IMR-90 (cell line): ENCODE measurements at regions of chr1 and their contacts with region 1.

Region 1: DNA sequence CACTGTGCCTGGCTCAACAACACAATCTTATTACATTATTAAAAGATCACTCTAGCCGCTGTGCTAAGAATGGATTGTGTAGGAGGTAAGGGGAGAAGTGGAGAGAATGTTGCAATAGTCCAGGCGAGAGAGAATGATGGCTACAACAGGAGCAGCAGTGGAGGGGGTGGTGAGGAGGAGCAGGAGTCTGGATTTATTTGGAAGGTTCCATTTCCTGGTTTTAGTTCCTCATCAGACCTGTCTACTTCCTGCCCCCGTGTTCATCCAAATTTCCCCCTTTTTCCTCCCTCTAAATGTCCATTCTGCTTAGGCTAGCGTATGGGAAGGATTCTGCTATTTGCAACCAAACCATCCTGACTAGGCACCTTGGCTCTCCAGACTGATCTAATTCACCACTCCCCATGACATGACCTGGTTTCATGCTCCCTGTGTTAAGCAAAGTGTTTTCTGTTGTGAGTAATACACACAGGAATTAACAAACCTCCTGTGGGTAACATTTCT is 35.1 kb upstream of the EYA3 start:
- DNase-seq: peak; percentile 86
- ATAC-seq: peak; percentile 89
- H3K4me3 ChIP-seq: no peak overlapping the region
- H3K27ac ChIP-seq: peak overlapping the region; percentile 34; the same call in 1 of the 2 replicates
- H3K4me1 ChIP-seq: peaks cover 5% of the 10 kb centered on the region; the same call in 1 of the 2 replicates
- H3K27me3 ChIP-seq: no peaks in the 10 kb centered on the region
- CTCF ChIP-seq: no peak
- POLR2A ChIP-seq: no peak
- RAD21 ChIP-seq: no peak

Region 2: DNA sequence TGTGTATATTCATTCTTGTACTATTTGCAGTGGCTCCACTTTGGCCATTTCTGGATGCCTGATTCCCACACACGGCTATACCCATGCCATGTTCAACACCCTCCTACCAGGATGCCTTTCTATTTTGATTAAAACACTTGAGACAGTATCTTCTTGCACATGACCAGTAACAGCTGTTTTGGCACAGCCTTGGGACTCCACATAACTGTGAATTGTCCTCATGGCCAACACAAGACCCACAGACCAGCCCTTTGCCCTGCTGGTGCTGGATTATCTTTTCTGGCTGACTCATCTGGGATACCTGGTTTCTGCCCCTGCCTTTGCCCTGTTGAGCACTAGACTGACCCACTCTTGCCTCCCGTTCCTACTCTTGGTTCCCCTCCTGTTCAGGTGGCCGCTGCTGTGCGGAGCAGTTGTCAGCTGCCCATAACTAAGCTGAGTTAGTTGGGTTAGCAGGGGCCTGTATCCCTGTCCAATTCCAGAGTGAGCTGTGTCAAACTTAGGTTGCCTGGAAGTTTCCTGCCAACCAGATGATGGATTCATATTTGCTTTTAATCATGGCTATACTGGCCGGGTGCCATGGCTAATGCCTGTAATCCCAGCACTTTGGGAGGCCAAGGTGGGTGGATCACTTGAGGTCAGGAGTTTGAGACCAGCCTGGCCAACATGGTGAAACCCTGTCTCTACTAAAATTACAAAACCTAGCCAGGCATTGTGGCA is 24.3 kb before region 1 on chr1:
- CTCF ChIA-PET with region 1: no interaction called
- POLR2A ChIA-PET with region 1: no interaction called
- dilution Hi-C with region 1: no loop called
- in situ Hi-C with region 1: no loop called
- intact Hi-C with region 1: loop called (anchors 1 kb)
- DNase-seq: peak; percentile 26
- ATAC-seq: peak; percentile 69
- H3K4me3 ChIP-seq: no peak overlapping the region
- H3K27ac ChIP-seq: peak overlapping the region; percentile 61; the same call in 1 of the 2 replicates
- H3K4me1 ChIP-seq: peaks cover 5% of the 10 kb centered on the region
- H3K27me3 ChIP-seq: no peaks in the 10 kb centered on the region
- CTCF ChIP-seq: no peak
- POLR2A ChIP-seq: no peak
- RAD21 ChIP-seq: no peak

Region 3: GRCh38 chr1:28139025-28139712 is 15.7 kb after region 1 on chr1:
- CTCF ChIA-PET with region 1: no interaction called
- POLR2A ChIA-PET with region 1: no interaction called
- dilution Hi-C with region 1: no loop called
- in situ Hi-C with region 1: no loop called
- intact Hi-C with region 1: no loop called
- DNase-seq: peak; percentile 88
- ATAC-seq: peak; percentile 74
- H3K4me3 ChIP-seq: no peak overlapping the region
- H3K27ac ChIP-seq: no peak overlapping the region
- H3K4me1 ChIP-seq: peaks cover 3% of the 10 kb centered on the region; the same call in 1 of the 2 replicates
- H3K27me3 ChIP-seq: no peaks in the 10 kb centered on the region
- CTCF ChIP-seq: no peak
- POLR2A ChIP-seq: no peak
- RAD21 ChIP-seq: no peak